Heart left ventricle (tissue), 16 donors: ENCODE measurements at regions of chr20 and their contacts with region 1.

Region 1: DNA sequence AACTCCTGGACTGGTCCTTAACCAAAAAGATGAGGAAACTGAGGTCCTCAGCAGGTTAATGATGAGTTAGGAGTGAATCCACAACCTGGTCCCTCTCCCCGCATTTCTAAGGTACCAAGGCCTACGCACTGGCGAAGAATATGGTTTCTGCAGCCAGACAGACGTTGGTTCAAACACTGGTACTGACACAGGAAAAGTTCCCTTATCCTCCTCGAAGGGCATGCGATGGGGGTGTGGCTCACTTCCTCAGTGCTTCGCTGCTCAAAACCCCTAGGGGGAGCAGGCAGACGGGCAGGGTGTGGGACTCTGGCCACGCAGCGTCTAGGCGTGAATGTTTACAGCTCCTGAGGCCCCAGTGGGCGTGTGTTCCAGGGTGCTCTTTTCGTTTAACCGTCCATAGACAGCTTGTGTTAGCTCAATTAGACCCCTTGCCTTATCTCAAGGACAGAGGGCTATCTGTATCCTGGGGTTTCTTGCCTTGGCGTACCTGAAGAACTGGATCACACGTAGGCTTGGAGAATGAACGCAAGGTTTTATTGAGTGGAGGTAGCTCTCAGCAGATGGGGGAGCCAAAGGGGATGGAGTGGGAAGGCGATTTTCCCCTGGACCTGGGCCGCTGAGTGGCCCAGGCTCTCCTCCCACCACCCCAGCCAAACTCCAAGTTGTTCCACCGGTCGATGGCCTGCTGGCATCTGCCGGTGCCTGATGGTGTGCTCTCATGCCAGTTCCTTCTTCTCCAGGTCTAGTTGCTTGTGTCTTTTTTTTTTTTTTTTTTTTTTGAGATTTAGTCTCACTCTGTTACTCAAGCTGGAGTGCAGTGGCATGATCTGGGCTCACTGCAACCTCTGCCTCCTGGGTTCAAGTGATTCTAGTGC is 31.8 kb upstream of the PTPN1 start:
- DNase-seq: peak; percentile 45 to 79 (median 63)
- ATAC-seq: peak in 3 of 4 donors; percentile 60 to 78 (median 71)
- H3K4me3 ChIP-seq: no peak overlapping the region
- H3K27ac ChIP-seq: no peak overlapping the region
- H3K4me1 ChIP-seq: peaks cover 0 to 45% (median 12%) of the 10 kb centered on the region in 12 donors
- H3K27me3 ChIP-seq: no peaks in the 10 kb centered on the region
- CTCF ChIP-seq: peak in 11 of 12 donors; percentile 15 to 60 (median 36)
- POLR2A ChIP-seq: no peak

Region 2: GRCh38 chr20:50115591-50116372 is 362.6 kb before region 1 on chr20:
- intact Hi-C with region 1: loop called in 1 of 10 experiments (anchors 10 kb)
- DNase-seq: peak; percentile 97 to 99 (median 98)
- ATAC-seq: peak; percentile 87 to 94 (median 89)
- H3K4me3 ChIP-seq: peak overlapping the region; percentile 30 to 67 (median 56)
- H3K27ac ChIP-seq: peak overlapping the region; percentile 18 to 86 (median 78)
- H3K4me1 ChIP-seq: peaks cover 11 to 50% (median 34%) of the 10 kb centered on the region in 12 donors
- H3K27me3 ChIP-seq: no peaks in the 10 kb centered on the region
- CTCF ChIP-seq: no peak
- POLR2A ChIP-seq: peak in 1 of 2 donors; percentile 61